B cell (primary cell): ENCODE measurements at regions of chr17 and their contacts with region 1.

Region 1: GRCh38 chr17:41930009-41930832 is at the start of gene ODAD4:
- DNase-seq: peak; percentile 95
- ATAC-seq: peak; percentile 99
- H3K4me3 ChIP-seq: peak within 1 kb of the TSS; percentile 46 to 92 (median 81)
- H3K4me3 Mint-ChIP-seq: peak within 1 kb of the TSS; percentile 96
- H3K27ac ChIP-seq: peak within 1 kb of the TSS; percentile 60 to 83
- H3K27ac Mint-ChIP-seq: peak within 1 kb of the TSS; percentile 88
- H3K4me1 ChIP-seq: peaks cover 10 to 32% of the 10 kb centered on the region in 2 donors
- H3K4me1 Mint-ChIP-seq: peaks cover 30% of the 10 kb centered on the region
- H3K27me3 ChIP-seq: no peaks in the 10 kb centered on the region
- H3K27me3 Mint-ChIP-seq: no peaks in the 10 kb centered on the region
- CTCF ChIP-seq: no peak
- total RNA-seq, gene ODAD4: 0.27 and 0.56 TPM in 2 replicates

Region 2: GRCh38 chr17:41918314-41919164 is 11.7 kb before region 1 on chr17 and contains the start of gene ACLY:
- CTCF ChIA-PET with region 1: interaction called, 5 read pairs
- POLR2A ChIA-PET with region 1: interaction called, 16 read pairs
- intact Hi-C with region 1: loop called (anchors 1 kb)
- DNase-seq: peak; percentile 95
- ATAC-seq: peak; percentile 99
- H3K4me3 ChIP-seq: peak within 1 kb of the TSS; percentile 78 to 99 (median 98)
- H3K4me3 Mint-ChIP-seq: peak within 1 kb of the TSS; percentile 91
- H3K27ac ChIP-seq: peak within 1 kb of the TSS; percentile 62 to 81
- H3K27ac Mint-ChIP-seq: peak within 1 kb of the TSS; percentile 89
- H3K4me1 ChIP-seq: peaks cover 15 to 21% of the 10 kb centered on the region in 2 donors
- H3K4me1 Mint-ChIP-seq: peaks cover 40% of the 10 kb centered on the region
- H3K27me3 ChIP-seq: no peaks in the 10 kb centered on the region
- H3K27me3 Mint-ChIP-seq: no peaks in the 10 kb centered on the region
- CTCF ChIP-seq: no peak
- total RNA-seq, gene ACLY: 85.3 and 91.5 TPM in 2 replicates